GM10248 (cell line): ENCODE measurements at regions of chr5 and their contacts with region 1.

Region 1: GRCh38 chr5:127856292-127856691 is 153.1 kb downstream of the CCDC192 start:
- DNase-seq: no peak
- CTCF ChIP-seq: no peak

Region 2: GRCh38 chr5:127867389-127867788 is 11.1 kb after region 1 on chr5:
- CTCF ChIA-PET with region 1: interaction called, 17 read pairs
- POLR2A ChIA-PET with region 1: no interaction called
- DNase-seq: no peak
- CTCF ChIP-seq: no peak